Activated T-helper 1 cell treated with anti-CD3 and anti-CD28 coated beads, Interleukin-12 subunit alpha, Interleukin-12 subunit beta, Interleukin-2, Interleukin-4 antibody, amounts not matched to agents 30 ng/mL and 10 ng/mL and 1 ng/mL, durations not matched to agents 14 hours and 24 hours and 36 hours (primary cell): ENCODE measurements at regions of chr17 and their contacts with region 1.

Region 1: GRCh38 chr17:59846394-59847165 is 46.2 kb downstream of the TUBD1 start:
- DNase-seq: peak; percentile 51
- H3K4me3 Mint-ChIP-seq: peak overlapping the region; percentile 50
- H3K27ac Mint-ChIP-seq: peak overlapping the region; percentile 94
- H3K4me1 Mint-ChIP-seq: peaks cover 68% of the 10 kb centered on the region
- H3K27me3 Mint-ChIP-seq: no peaks in the 10 kb centered on the region

Region 2: DNA sequence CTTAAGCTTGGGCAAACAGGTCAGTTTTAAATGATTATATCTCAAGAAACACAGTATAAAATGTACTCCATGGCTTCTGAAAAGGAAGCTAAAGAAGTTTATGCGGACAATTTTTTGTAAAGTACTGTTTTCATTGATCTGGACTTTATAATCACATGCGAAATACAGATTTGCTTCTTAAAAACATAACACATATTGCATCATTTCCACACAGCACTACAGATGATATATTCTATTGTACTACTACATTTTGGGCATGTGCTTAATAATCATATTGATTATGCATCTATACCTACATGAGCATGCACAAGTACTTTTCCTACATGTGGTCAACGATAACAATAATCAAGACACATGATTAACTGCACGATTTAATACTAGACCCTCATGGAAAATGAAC is 762.4 kb before region 1 on chr17:
- intact Hi-C with region 1: no loop called
- DNase-seq: no peak
- H3K4me3 Mint-ChIP-seq: no peak overlapping the region
- H3K27ac Mint-ChIP-seq: no peak overlapping the region
- H3K4me1 Mint-ChIP-seq: peaks cover 6% of the 10 kb centered on the region
- H3K27me3 Mint-ChIP-seq: no peaks in the 10 kb centered on the region

Region 3: GRCh38 chr17:59762513-59763374 is 83.8 kb before region 1 on chr17:
- intact Hi-C with region 1: loop called (anchors 1 kb)
- DNase-seq: no peak
- H3K4me3 Mint-ChIP-seq: peak overlapping the region; percentile 64
- H3K27ac Mint-ChIP-seq: peak overlapping the region; percentile 96
- H3K4me1 Mint-ChIP-seq: peaks cover 58% of the 10 kb centered on the region
- H3K27me3 Mint-ChIP-seq: no peaks in the 10 kb centered on the region

Region 4: DNA sequence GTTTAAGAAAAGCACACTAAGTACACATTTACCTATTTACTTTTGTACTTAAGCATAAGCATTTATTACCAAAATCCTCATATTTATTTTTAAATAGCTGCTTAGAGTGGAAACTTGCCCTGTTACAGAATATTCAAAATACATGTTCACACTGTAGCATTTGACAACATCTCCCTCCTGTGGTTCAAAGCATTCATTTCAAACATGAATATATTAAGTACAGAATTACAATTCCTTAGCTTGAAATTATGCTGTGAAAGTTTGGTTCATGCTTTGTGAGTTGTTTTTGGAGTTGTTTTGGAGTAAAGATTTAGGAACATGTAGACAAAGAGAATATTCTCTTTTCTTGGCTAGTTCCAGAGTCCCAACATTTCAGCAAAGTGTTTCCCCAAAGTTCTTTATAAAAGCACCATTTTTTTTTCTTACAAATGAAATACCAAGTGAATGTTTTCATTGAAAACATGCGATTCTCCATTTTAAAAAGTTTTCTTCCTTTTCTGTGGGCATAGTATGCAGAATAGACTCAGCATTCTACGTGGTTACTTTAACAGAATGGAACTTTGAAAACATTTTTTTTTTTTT is 13.0 kb after region 1 on chr17:
- intact Hi-C with region 1: loop called (anchors 1 kb)
- DNase-seq: no peak
- H3K4me3 Mint-ChIP-seq: no peak overlapping the region
- H3K27ac Mint-ChIP-seq: peak overlapping the region; percentile 67
- H3K4me1 Mint-ChIP-seq: peaks cover 28% of the 10 kb centered on the region
- H3K27me3 Mint-ChIP-seq: no peaks in the 10 kb centered on the region

Region 5: GRCh38 chr17:59941131-59941530 is 94.6 kb after region 1 on chr17:
- intact Hi-C with region 1: loop called (anchors 5 kb)
- DNase-seq: no peak
- H3K4me3 Mint-ChIP-seq: no peak overlapping the region
- H3K27ac Mint-ChIP-seq: peak overlapping the region; percentile 84
- H3K4me1 Mint-ChIP-seq: peaks cover 54% of the 10 kb centered on the region
- H3K27me3 Mint-ChIP-seq: no peaks in the 10 kb centered on the region